ENCODE measurements at regions of chr14 and their contacts with region 1.

Region 1: DNA sequence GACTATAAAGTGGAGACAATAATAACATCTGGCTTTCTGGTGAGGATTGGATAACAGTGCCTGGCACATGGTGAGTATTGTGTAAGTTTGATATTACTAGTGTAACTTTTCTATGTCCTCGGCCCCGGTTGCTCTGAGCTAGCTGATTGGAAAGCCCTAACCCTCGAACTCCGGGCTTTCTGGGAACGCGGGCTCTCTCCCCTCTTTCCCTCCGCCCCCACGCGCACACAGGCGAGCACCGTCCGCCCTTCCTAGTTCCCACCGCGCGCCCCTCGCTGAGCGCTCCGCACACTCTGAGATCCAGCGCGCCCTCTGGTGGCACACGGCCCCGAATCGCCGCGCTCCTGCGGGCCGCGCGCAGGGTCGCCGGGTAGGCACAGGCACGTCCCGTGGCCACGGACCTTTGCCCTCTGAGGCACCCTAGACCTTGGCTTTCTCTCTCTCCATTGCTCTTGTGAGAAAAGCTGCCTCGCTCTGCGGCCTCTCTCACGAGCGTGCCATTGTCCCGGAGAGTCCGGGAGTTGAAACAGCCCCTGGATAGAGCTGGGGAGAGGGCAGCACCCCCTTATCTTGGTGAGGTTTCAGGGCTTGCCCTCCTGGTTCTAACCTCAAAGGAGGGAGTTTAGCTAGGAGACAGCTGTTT is 23.2 kb upstream of the ESRRB start:
- DNase-seq: peak; percentile 59
- H3K4me3 ChIP-seq: peak overlapping the region; percentile 53
- H3K27ac ChIP-seq: no peak overlapping the region
- H3K4me1 ChIP-seq: peaks cover 18% of the 10 kb centered on the region
- H3K27me3 ChIP-seq: peaks cover 14% of the 10 kb centered on the region
- CTCF ChIP-seq: peak; percentile 92

Region 2: DNA sequence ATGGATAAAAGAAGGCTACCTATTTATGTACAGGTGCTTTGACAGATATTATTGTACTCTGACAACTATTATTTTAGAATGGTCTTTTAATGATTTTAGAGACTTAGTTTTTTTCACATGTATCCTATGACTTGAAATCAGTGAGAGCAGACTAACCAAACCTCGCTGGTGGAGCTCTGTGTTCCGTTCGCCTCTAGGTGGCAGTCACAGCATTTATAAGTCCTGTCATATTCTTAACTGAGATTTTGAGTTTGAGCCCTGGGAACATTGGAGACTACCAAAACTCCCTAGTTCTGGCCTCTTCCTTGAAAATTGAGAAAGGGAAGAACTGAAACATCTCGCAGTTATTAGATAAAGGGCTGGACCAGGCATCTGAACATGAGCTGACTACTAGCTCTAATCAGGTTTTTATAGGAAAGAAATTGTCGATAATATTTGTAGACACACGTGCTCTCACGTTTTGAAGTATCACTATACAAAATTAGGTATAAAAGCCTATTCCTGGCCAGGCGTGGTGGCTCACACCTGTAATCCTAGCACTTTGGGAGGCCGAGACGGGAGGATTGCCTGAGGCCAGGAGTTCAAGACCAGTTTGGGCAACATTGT is 643.5 kb before region 1 on chr14:
- intact Hi-C with region 1: loop called (anchors 10 kb)
- DNase-seq: peak; percentile 64
- H3K4me3 ChIP-seq: no peak overlapping the region
- H3K27ac ChIP-seq: no peak overlapping the region
- H3K4me1 ChIP-seq: peaks cover 28% of the 10 kb centered on the region
- H3K27me3 ChIP-seq: no peaks in the 10 kb centered on the region
- CTCF ChIP-seq: peak; percentile 88